Head of caudate nucleus (tissue), 42 donors: ENCODE measurements at regions of chr16 and their contacts with region 1.

Region 1: GRCh38 chr16:28069971-28070794 is 6.7 kb upstream of the GSG1L start:
- DNase-seq: peak in 5 of 42 donors; percentile 29 to 47 (median 37)

Region 2: GRCh38 chr16:27639561-27640276 is 430.5 kb before region 1 on chr16:
- intact Hi-C with region 1: loop called (anchors 5 kb)
- DNase-seq: peak; percentile 22 to 87 (median 60)